ENCODE measurements at regions of chr3 and their contacts with region 1.

Region 1: DNA sequence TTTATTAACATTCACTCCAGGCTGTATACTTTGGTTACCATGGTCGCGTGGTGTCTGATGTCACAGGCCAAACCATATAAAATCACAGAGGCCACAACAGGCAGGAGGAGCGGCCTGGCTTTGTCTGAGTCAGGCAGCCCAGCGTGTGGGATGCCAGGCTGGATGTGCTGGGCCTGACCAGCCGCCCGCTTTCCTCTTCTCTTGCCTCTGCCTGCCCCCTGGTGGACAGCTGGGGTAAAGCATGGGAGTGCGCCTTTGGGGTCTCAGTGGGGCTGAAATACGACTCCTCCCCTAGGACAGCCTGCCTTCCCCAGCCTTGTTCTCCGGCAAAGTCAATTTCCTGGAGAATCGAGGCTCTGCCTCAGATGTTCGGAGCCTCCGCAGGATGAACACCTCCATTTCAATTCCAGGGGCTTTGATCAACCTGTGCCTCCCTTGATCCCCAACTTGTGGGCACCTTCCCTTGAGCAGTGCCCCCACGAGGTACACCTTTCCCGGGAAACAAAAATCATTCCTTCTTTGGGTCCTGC is 78.2 kb downstream of the CCNL1 start:
- DNase-seq: peak; percentile 85
- H3K4me3 ChIP-seq: no peak overlapping the region
- H3K27ac ChIP-seq: no peak overlapping the region
- H3K4me1 ChIP-seq: no peaks in the 10 kb centered on the region
- H3K27me3 ChIP-seq: no peaks in the 10 kb centered on the region
- CTCF ChIP-seq: peak; percentile 94 to 96
- POLR2A ChIP-seq: no peak

Region 2: DNA sequence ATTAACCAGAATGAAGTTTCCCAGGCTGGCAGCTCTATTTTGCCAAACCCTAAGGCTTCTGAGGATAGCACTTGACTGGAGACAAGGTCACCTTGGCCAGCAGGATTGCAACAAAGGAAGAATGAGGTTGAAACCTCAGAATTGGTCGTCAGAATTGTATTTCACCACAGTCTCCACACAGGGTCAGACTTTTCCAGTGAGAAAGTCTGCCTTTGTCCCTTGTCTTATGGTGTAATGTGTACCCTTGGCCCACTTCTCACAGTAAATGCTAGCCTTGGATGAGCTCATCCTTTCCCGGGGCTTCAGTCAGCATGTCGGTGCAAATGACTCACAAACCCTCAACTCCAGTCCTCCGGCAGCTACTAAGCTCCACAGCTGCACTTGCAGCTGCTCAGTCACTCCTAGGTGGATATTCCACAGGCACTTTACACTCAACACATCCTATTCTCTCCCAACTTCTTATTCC is 546.6 kb before region 1 on chr3:
- CTCF ChIA-PET with region 1: interaction called, 21 read pairs
- POLR2A ChIA-PET with region 1: no interaction called
- dilution Hi-C with region 1: no loop called
- intact Hi-C with region 1: loop called (anchors 1 kb)
- DNase-seq: peak; percentile 94
- H3K4me3 ChIP-seq: no peak overlapping the region
- H3K27ac ChIP-seq: peak overlapping the region; percentile 55
- H3K4me1 ChIP-seq: peaks cover 7% of the 10 kb centered on the region
- H3K27me3 ChIP-seq: no peaks in the 10 kb centered on the region
- CTCF ChIP-seq: peak in 1 of 2 donors; percentile 22
- POLR2A ChIP-seq: peak; percentile 58

Region 3: GRCh38 chr3:156816800-156817645 is 264.7 kb before region 1 on chr3:
- CTCF ChIA-PET with region 1: interaction called, 3 read pairs
- POLR2A ChIA-PET with region 1: no interaction called
- dilution Hi-C with region 1: no loop called
- intact Hi-C with region 1: loop called (anchors 2 kb)
- DNase-seq: peak; percentile 86
- H3K4me3 ChIP-seq: peak overlapping the region in 2 of 3 experiments; percentile 37
- H3K27ac ChIP-seq: peak overlapping the region; percentile 91
- H3K4me1 ChIP-seq: peaks cover 56% of the 10 kb centered on the region
- H3K27me3 ChIP-seq: no peaks in the 10 kb centered on the region
- CTCF ChIP-seq: no peak
- POLR2A ChIP-seq: no peak

Region 4: GRCh38 chr3:156918746-156919145 is 163.0 kb before region 1 on chr3:
- CTCF ChIA-PET with region 1: no interaction called
- POLR2A ChIA-PET with region 1: no interaction called
- dilution Hi-C with region 1: no loop called
- intact Hi-C with region 1: no loop called
- DNase-seq: no peak
- H3K4me3 ChIP-seq: no peak overlapping the region
- H3K27ac ChIP-seq: no peak overlapping the region
- H3K4me1 ChIP-seq: no peaks in the 10 kb centered on the region
- H3K27me3 ChIP-seq: no peaks in the 10 kb centered on the region
- CTCF ChIP-seq: no peak
- POLR2A ChIP-seq: no peak

Region 5: DNA sequence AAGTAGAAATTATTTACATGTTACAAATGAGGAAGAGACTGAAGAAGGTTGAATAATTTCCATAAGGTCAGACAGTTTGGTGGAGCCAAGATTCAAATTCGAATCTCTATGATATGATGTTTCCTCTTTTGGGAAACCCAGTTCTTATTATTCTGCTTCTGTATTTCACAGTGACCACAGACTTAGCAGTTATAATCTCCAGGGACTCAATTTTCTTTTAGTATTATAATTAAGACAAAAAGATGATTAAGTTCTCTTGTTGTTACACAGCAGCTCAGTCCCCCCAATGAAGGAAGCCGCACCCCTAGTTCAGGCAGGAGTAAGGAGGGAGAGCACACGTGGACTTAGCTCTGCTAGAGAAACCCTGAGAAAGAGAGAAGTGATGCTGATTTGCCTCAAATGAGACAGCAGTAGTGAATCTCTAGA is 52.4 kb before region 1 on chr3:
- CTCF ChIA-PET with region 1: no interaction called
- POLR2A ChIA-PET with region 1: no interaction called
- dilution Hi-C with region 1: no loop called
- intact Hi-C with region 1: loop called (anchors 2 kb)
- DNase-seq: no peak
- H3K4me3 ChIP-seq: no peak overlapping the region
- H3K27ac ChIP-seq: no peak overlapping the region
- H3K4me1 ChIP-seq: peaks cover 12% of the 10 kb centered on the region
- H3K27me3 ChIP-seq: no peaks in the 10 kb centered on the region
- CTCF ChIP-seq: no peak
- POLR2A ChIP-seq: no peak

Region 6: GRCh38 chr3:157136647-157137387 is 55.1 kb after region 1 on chr3:
- CTCF ChIA-PET with region 1: interaction called, 83 read pairs
- POLR2A ChIA-PET with region 1: no interaction called
- dilution Hi-C with region 1: no loop called
- intact Hi-C with region 1: loop called (anchors 1 kb)
- DNase-seq: no peak
- H3K4me3 ChIP-seq: no peak overlapping the region
- H3K27ac ChIP-seq: no peak overlapping the region
- H3K4me1 ChIP-seq: peaks cover 6% of the 10 kb centered on the region
- H3K27me3 ChIP-seq: no peaks in the 10 kb centered on the region
- CTCF ChIP-seq: no peak
- POLR2A ChIP-seq: no peak